Activated naive CD4-positive, alpha-beta T cell treated with anti-CD3 and anti-CD28 coated beads for 36 hours (primary cell): ENCODE measurements at regions of chr11 and their contacts with region 1.

Region 1: DNA sequence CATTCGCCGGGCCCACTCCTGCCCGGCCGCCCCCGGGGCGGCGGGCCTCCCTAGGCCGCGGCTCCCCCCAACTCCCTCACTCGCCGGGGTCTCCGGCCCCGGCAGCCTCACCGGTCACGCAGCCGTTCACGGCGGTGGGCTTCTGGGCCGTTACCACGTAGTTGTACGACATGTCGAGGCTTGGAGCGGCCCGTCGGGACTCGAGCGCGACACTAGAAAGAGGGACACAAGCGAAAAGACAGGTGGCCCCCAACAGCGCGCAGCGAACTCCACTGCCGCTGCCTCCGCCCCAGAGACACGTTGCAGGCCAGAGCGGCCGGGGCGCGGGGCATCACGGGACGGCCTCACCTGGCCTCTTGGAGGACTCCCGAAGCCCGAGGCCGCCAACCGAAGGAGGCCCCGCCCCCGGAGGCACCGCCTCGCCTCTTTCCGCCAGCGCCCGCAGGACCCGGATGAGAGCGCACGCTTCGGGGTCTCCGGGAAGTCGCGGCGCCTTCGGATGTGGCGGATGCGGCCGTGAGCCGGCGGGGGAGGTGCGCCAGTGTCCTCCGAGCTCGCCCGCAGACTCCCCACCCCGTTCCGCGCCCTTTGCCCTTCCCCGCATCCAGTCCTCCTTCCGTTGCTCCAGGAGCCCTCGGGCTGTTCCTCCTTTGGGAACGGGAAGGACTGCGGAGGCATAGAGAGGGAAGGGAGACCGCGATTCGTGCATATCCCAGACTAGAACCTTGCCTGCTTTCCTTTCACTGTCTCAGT is at the starts of genes DDB1 and TKFC:
- DNase-seq: peak; percentile 98
- H3K4me3 Mint-ChIP-seq: peak within 1 kb of the TSS; percentile 96
- H3K27ac Mint-ChIP-seq: peak within 1 kb of the TSS; percentile 94
- H3K4me1 Mint-ChIP-seq: peaks cover 73% of the 10 kb centered on the region
- H3K27me3 Mint-ChIP-seq: no peaks in the 10 kb centered on the region
- total RNA-seq, gene DDB1: 227 to 236 TPM
- total RNA-seq, gene TKFC: 146 to 154 TPM

Region 2: DNA sequence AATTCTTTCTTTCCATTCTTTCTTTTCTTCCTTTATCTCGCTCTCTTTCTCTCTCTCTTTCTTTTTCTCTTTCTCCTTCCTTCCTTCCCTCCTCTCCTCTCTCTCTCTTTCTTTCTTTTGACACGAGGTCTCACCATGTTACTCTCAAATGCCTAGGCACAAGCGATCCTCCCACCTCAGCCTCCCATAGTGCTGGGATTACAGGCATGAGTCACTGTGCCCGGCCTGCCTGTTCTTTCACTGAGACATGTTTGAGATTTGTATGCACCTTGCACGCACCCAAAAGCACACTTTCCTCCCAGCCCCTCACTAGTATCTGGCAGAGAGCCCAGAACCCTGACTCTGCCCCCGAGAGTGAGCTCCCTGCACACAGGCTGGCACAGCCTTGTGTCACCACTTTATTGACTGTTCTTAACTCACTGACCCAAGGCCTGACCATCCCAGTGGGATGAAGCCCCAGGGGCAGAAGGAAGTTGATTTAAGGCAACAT is 304.7 kb before region 1 on chr11:
- CTCF ChIA-PET with region 1: no interaction called
- intact Hi-C with region 1: loop called (anchors 10 kb)
- DNase-seq: peak; percentile 93
- H3K4me3 Mint-ChIP-seq: peak overlapping the region; percentile 87
- H3K27ac Mint-ChIP-seq: peak overlapping the region; percentile 100
- H3K4me1 Mint-ChIP-seq: peaks cover 82% of the 10 kb centered on the region
- H3K27me3 Mint-ChIP-seq: no peaks in the 10 kb centered on the region

Region 3: DNA sequence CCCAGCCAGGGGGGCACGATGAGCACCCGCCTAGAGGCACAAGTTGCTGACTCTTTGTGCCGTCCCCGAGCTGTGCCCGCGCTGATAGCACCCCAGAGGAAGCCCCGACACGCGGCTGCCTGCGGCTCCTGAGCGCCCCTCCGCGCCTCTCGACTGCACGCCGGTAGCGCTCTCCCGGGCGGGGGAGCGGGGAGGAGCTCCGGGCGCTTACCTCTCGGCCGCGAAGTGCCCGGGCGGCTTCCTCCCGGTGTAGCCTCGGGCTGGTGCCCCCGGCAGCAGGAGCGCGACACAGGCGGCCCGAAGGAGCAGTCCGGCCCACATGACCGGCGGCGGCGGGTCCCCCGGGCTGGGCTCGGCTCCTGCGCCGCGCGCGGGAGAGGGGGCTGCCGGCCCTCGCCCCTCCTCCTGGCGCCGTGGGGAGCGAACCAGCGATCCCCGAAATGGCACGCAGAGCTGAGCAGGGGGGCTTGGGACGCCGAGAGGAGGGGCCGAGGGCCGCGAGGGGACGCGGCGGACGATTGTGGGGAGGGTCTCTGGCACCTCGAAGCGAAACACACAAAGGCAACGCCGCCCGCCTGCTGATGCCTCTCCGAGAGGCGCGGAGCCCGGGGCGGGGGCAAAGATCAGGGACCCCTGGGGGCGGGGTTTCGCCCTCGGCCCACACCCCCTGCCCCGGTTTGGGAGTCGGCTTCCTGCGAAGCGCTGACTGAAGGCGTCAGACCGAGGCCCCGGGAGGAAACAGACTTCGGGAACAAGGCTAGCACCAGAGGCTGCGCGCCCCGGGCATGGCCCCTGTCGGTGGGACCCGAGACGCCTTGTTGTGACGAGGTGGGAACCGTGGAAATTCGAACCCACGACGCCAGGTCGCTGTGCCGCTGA is 38.0 kb before region 1 on chr11 and contains the start of gene VWCE:
- CTCF ChIA-PET with region 1: interaction called, 10 read pairs
- intact Hi-C with region 1: loop called (anchors 2 kb)
- DNase-seq: peak; percentile 83
- H3K4me3 Mint-ChIP-seq: peak within 1 kb of the TSS; percentile 84
- H3K27ac Mint-ChIP-seq: peak within 1 kb of the TSS; percentile 41
- H3K4me1 Mint-ChIP-seq: peaks cover 34% of the 10 kb centered on the region
- H3K27me3 Mint-ChIP-seq: peaks cover 9% of the 10 kb centered on the region
- total RNA-seq, gene VWCE: 6.6 TPM

Region 4: GRCh38 chr11:61369372-61370219 is 36.6 kb after region 1 on chr11:
- CTCF ChIA-PET with region 1: interaction called, 15 read pairs
- intact Hi-C with region 1: no loop called
- DNase-seq: no peak
- H3K4me3 Mint-ChIP-seq: no peak overlapping the region
- H3K27ac Mint-ChIP-seq: peak overlapping the region; percentile 2
- H3K4me1 Mint-ChIP-seq: no peaks in the 10 kb centered on the region
- H3K27me3 Mint-ChIP-seq: no peaks in the 10 kb centered on the region

Region 5: GRCh38 chr11:61392981-61393595 is 60.1 kb after region 1 on chr11:
- CTCF ChIA-PET with region 1: interaction called, 92 read pairs
- intact Hi-C with region 1: loop called (anchors 1 kb)
- DNase-seq: peak; percentile 37
- H3K4me3 Mint-ChIP-seq: peak overlapping the region; percentile 89
- H3K27ac Mint-ChIP-seq: peak overlapping the region; percentile 81
- H3K4me1 Mint-ChIP-seq: peaks cover 17% of the 10 kb centered on the region
- H3K27me3 Mint-ChIP-seq: no peaks in the 10 kb centered on the region

Region 6: DNA sequence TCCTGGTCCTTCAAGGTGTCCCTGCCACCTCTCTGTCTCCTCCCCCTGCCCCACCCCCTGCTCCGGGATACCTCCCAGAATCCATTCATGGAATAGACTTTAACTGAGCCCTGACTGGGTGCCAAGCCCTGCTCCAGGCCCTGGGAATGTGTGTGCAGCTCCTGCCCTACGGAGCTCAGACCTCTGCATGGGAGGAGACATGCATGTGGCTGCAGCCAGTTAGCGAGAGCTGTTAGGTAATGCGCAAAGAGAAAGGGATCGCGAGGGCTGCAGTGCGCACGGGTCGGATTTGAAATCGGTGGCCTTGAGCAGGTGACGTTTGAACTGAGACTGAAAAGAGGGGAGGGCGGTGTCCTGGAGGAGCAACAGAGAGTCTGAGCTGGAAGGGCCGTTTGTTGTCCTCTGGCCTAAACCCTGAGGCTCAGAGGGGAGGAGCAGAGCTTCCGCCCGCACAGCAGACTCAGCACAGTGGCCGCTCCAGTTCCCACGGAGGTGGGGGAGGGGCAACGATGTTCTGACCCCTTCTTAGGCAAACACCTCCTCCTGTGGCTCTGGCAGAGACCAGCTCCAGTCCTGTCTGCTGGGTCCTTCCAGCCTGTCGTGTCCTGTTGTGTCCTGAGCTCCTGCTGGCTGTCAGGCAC is 155.8 kb after region 1 on chr11:
- CTCF ChIA-PET with region 1: no interaction called
- intact Hi-C with region 1: no loop called
- DNase-seq: no peak
- H3K4me3 Mint-ChIP-seq: no peak overlapping the region
- H3K27ac Mint-ChIP-seq: no peak overlapping the region
- H3K4me1 Mint-ChIP-seq: no peaks in the 10 kb centered on the region
- H3K27me3 Mint-ChIP-seq: no peaks in the 10 kb centered on the region

Region 7: DNA sequence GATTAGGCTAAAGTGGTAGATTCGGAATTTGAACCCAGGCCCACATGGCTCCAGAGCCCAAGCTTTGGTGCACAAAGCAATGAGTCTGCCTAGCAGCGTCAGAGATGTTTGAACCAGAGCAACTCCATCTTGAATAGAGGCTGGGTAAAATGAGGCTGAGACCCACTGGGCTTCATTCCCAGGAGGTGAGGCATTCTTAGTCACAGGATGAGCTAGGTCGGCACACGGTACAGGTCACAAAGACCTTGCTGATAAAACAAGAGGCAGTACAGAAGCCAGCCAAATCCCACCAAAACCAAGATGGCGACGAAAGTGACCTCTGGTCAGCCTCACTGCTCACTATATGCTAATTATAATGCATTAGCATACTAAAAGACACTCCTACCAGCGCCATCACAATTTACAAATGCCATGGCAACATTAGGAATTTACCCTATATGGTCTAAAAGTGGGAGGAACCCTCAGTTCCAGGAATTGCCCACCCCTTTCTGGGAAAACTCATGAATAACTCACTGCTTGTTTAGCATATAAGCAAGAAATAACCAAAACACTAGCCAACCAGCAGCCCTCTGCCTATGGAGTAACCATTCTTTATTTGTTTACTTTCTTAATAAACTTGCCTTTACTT is 307.0 kb after region 1 on chr11:
- CTCF ChIA-PET with region 1: no interaction called
- intact Hi-C with region 1: loop called (anchors 2 kb)
- DNase-seq: no peak
- H3K4me3 Mint-ChIP-seq: no peak overlapping the region
- H3K27ac Mint-ChIP-seq: no peak overlapping the region
- H3K4me1 Mint-ChIP-seq: no peaks in the 10 kb centered on the region
- H3K27me3 Mint-ChIP-seq: no peaks in the 10 kb centered on the region

Region 8: GRCh38 chr11:62013591-62014476 is 680.9 kb after region 1 on chr11:
- CTCF ChIA-PET with region 1: no interaction called
- intact Hi-C with region 1: no loop called
- DNase-seq: no peak
- H3K4me3 Mint-ChIP-seq: no peak overlapping the region
- H3K27ac Mint-ChIP-seq: no peak overlapping the region
- H3K4me1 Mint-ChIP-seq: no peaks in the 10 kb centered on the region
- H3K27me3 Mint-ChIP-seq: no peaks in the 10 kb centered on the region